A549 (cell line): ENCODE measurements at regions of chr6 and their contacts with region 1.

Region 1: GRCh38 chr6:142112451-142113061 is 20.2 kb upstream of the GJE1 start:
- DNase-seq: peak; percentile 23 to 79
- ATAC-seq: no peak
- H3K4me3 ChIP-seq: no peak overlapping the region
- H3K27ac ChIP-seq: no peak overlapping the region
- H3K4me1 ChIP-seq: no peaks in the 10 kb centered on the region
- CTCF ChIP-seq: peak; percentile 71
- EP300 ChIP-seq: no peak
- POLR2A ChIP-seq: no peak
- RAD21 ChIP-seq: peak; percentile 80

Region 2: DNA sequence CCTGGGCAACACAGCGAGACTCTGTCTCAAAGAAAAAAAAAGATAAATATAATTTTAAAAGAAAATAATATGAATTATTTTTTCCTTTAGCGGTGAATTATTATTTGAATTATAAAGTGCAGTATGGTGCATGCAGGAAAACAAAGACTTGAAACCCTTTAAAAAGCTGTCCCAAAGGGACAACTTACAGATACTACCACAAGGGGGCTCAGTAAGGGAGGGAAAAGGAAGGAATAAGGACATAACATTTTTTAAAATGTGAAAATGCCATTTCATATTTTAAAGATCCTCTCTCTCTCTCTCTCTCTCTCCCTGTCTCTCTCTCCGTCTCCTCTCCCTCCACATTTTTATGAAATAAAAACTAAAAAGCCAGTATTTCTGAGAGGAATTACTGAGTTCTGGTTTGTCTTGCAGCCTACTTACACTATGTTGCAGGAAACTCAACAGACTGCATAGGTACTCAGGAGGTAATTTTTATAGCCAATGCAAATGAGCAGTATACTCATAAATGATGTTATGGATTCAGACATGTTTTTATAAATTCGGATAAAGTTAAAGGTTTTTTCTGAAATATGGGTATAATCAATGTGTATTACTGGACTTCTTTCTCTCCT is 434.9 kb before region 1 on chr6:
- CTCF ChIA-PET with region 1: interaction called, 10 read pairs
- POLR2A ChIA-PET with region 1: no interaction called
- DNase-seq: peak in 1 of 2 experiments; percentile 30
- ATAC-seq: peak in 1 of 2 experiments; percentile 62; a peak in 1 of 6 replicates
- H3K4me3 ChIP-seq: no peak overlapping the region
- H3K27ac ChIP-seq: no peak overlapping the region
- H3K4me1 ChIP-seq: no peaks in the 10 kb centered on the region
- CTCF ChIP-seq: peak; percentile 56
- EP300 ChIP-seq: no peak
- POLR2A ChIP-seq: no peak
- RAD21 ChIP-seq: peak; percentile 47 to 55

Region 3: GRCh38 chr6:141988954-141989705 is 123.4 kb before region 1 on chr6:
- CTCF ChIA-PET with region 1: interaction called, 19 read pairs
- POLR2A ChIA-PET with region 1: no interaction called
- DNase-seq: peak; percentile 20 to 61
- ATAC-seq: peak in 1 of 2 experiments; percentile 66; a peak in 4 of 6 replicates
- H3K4me3 ChIP-seq: no peak overlapping the region
- H3K27ac ChIP-seq: no peak overlapping the region
- H3K4me1 ChIP-seq: no peaks in the 10 kb centered on the region
- CTCF ChIP-seq: peak; percentile 66
- EP300 ChIP-seq: no peak
- POLR2A ChIP-seq: no peak
- RAD21 ChIP-seq: peak; percentile 83 to 87

Region 4: DNA sequence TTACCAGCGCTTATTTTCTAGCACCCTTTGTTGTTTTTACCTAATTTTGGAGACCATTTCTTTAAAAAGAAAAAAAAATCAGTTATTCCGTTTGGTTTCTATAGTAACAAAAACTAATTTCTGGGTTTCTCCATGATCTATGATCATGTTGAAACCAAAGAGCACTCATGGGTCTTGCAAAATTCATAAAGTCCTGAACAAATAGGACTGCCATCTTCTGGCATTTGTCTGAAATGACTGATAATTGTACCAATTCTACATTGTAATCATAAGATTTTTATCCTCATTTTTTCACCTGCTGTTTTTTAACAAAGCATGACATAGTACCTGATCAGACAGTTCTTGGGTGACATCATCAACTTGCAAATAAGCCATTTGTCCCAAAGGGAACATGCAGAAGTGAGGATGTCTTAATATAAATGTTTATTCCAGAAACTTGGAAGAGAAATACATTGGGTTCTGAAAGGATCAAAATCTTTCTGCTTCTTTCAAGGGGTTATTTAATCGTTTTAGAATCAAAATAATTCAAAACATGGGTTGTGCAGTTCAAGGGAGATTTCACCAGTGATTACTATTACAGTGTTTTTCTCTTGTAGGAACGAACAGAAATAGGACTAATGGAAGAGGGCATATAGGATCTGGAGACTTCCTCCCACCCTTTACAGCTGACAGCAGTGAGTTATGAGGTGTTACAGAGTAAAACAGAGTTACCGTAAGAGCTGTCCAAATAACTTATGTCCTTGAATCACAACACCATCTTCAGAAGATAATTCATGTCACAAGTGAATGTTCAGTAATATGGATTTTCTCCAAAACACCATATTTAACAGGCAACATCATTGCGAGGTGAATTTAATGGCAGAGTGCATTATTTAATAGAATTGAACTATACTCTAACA is 66.9 kb before region 1 on chr6:
- CTCF ChIA-PET with region 1: no interaction called
- POLR2A ChIA-PET with region 1: no interaction called
- DNase-seq: peak in 1 of 2 experiments; percentile 15
- ATAC-seq: no peak
- H3K4me3 ChIP-seq: no peak overlapping the region
- H3K27ac ChIP-seq: no peak overlapping the region
- H3K4me1 ChIP-seq: no peaks in the 10 kb centered on the region
- CTCF ChIP-seq: peak; percentile 48
- EP300 ChIP-seq: no peak
- POLR2A ChIP-seq: no peak
- RAD21 ChIP-seq: peak; percentile 41 to 42; a peak in 3 of 5 replicates

Region 5: GRCh38 chr6:142255785-142256184 is 143.2 kb after region 1 on chr6:
- CTCF ChIA-PET with region 1: no interaction called
- POLR2A ChIA-PET with region 1: no interaction called
- DNase-seq: no peak
- ATAC-seq: no peak
- H3K4me3 ChIP-seq: no peak overlapping the region
- H3K27ac ChIP-seq: no peak overlapping the region
- H3K4me1 ChIP-seq: peaks cover 6% of the 10 kb centered on the region; the same call in 2 of the 3 replicates
- CTCF ChIP-seq: no peak
- EP300 ChIP-seq: no peak
- POLR2A ChIP-seq: no peak
- RAD21 ChIP-seq: no peak

Region 6: GRCh38 chr6:142500250-142500786 is 387.8 kb after region 1 on chr6:
- CTCF ChIA-PET with region 1: no interaction called
- POLR2A ChIA-PET with region 1: no interaction called
- DNase-seq: no peak
- ATAC-seq: no peak
- H3K4me3 ChIP-seq: no peak overlapping the region
- H3K27ac ChIP-seq: no peak overlapping the region
- H3K4me1 ChIP-seq: no peaks in the 10 kb centered on the region
- CTCF ChIP-seq: no peak
- EP300 ChIP-seq: no peak
- POLR2A ChIP-seq: no peak
- RAD21 ChIP-seq: no peak